Ovary (tissue), 10 donors: ENCODE measurements at regions of chr5 and their contacts with region 1.

Region 1: DNA sequence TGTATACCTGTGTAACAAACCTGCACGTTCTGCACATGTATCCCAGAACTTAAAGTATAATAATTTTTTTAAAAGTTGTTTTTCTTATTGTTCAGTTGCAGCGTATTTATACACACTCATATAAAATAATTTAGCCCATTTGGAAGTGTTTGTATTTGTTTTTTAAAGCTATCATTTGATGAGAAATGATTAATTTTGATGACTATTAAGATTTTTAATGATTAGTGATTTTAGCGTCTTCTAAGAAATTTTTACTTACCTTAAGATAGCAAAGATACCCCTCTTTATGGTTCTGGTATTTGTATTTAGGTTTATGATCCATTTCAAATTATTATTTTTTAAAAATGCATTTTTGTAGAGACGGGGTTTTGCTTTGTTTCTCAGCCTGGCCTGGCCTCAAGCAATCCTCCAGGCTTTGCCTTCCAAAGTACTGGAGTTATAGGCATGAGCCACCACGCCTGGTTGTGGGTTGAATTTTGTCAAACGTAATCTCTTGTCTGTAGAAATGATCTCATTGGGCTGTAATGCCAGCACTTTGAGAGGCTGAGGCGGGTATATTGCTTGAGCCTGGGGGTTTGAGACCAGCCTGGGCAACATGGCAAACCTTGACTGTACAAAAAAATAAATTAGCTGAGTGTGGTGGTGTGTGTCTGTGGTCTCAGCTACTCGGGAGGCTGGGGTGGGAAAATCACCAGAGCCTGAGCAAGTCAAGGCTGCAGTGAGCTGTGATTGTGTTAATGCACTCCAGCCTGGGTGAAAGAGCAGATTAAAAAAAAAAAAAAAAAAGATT is 26.9 kb downstream of the CSNK1G3 start:
- DNase-seq: no peak
- H3K4me3 ChIP-seq: no peak overlapping the region
- H3K27ac ChIP-seq: no peak overlapping the region
- H3K4me1 ChIP-seq: no peaks in the 10 kb centered on the region
- H3K27me3 ChIP-seq: no peaks in the 10 kb centered on the region
- CTCF ChIP-seq: no peak
- EP300 ChIP-seq: no peak
- POLR2A ChIP-seq: no peak

Region 2: GRCh38 chr5:123273984-123274383 is 264.9 kb before region 1 on chr5:
- intact Hi-C with region 1: no loop called
- DNase-seq: no peak
- H3K4me3 ChIP-seq: no peak overlapping the region
- H3K27ac ChIP-seq: no peak overlapping the region
- H3K4me1 ChIP-seq: no peaks in the 10 kb centered on the region
- H3K27me3 ChIP-seq: no peaks in the 10 kb centered on the region
- CTCF ChIP-seq: no peak
- EP300 ChIP-seq: no peak
- POLR2A ChIP-seq: no peak

Region 3: DNA sequence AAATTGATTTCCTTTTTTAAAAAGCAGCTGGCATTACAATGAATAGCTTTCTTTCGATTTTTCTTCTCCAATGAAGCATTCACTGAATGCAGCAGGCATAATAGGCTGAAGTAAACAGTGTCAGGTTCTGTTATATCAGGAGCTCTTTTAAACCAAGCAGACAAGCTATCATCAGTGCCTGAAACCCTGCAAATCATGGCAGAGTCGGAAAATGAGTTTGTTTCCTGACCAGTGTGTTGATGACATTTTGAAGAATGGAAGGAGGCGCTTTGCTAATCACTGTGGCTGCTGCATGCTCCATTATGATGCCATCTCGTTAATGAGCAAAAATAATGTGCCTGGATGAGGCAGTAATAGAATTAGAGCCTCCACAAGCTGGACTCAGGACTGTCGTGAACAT is 923.1 kb after region 1 on chr5:
- intact Hi-C with region 1: no loop called
- DNase-seq: no peak
- H3K4me3 ChIP-seq: no peak overlapping the region
- H3K27ac ChIP-seq: no peak overlapping the region
- H3K4me1 ChIP-seq: peaks cover 3% of the 10 kb centered on the region
- H3K27me3 ChIP-seq: no peaks in the 10 kb centered on the region
- CTCF ChIP-seq: no peak
- EP300 ChIP-seq: no peak
- POLR2A ChIP-seq: no peak

Region 4: GRCh38 chr5:125408582-125409505 is 1870.0 kb after region 1 on chr5:
- intact Hi-C with region 1: loop called in 1 of 4 experiments (anchors 5 kb)
- DNase-seq: peak in 2 of 5 donors; percentile 10 to 34
- H3K4me3 ChIP-seq: no peak overlapping the region
- H3K27ac ChIP-seq: peak overlapping the region in 1 of 2 donors; percentile 18
- H3K4me1 ChIP-seq: peaks cover 6% of the 10 kb centered on the region
- H3K27me3 ChIP-seq: no peaks in the 10 kb centered on the region
- CTCF ChIP-seq: no peak
- EP300 ChIP-seq: no peak
- POLR2A ChIP-seq: no peak